CD8-positive, alpha-beta memory T cell (primary cell): ENCODE measurements at regions of chr1 and their contacts with region 1.

Region 1: GRCh38 chr1:205313563-205314308 is 7.8 kb downstream of the NUAK2 start:
- DNase-seq: peak in 4 of 5 donors; percentile 6 to 74 (median 48)
- H3K4me3 ChIP-seq: peak overlapping the region; percentile 47
- H3K4me3 Mint-ChIP-seq: peak overlapping the region; percentile 78 to 91 (median 82)
- H3K27ac ChIP-seq: no peak overlapping the region
- H3K27ac Mint-ChIP-seq: peak overlapping the region; percentile 87 to 96 (median 90)
- H3K4me1 ChIP-seq: peaks cover 87% of the 10 kb centered on the region
- H3K4me1 Mint-ChIP-seq: peaks cover 84 to 98% (median 85%) of the 10 kb centered on the region in 3 donors
- H3K27me3 ChIP-seq: no peaks in the 10 kb centered on the region
- H3K27me3 Mint-ChIP-seq: no peaks in the 10 kb centered on the region

Region 2: GRCh38 chr1:205284343-205285144 is 29.2 kb before region 1 on chr1:
- CTCF ChIA-PET with region 1: interaction called, 1,351 read pairs
- POLR2A ChIA-PET with region 1: interaction called, 86 read pairs
- DNase-seq: peak; percentile 80 to 97 (median 90)
- H3K4me3 ChIP-seq: peak overlapping the region; percentile 80
- H3K4me3 Mint-ChIP-seq: peak overlapping the region; percentile 73 to 87 (median 81)
- H3K27ac ChIP-seq: peak overlapping the region; percentile 7
- H3K27ac Mint-ChIP-seq: peak overlapping the region; percentile 77 to 98 (median 94)
- H3K4me1 ChIP-seq: peaks cover 85% of the 10 kb centered on the region
- H3K4me1 Mint-ChIP-seq: peaks cover 78 to 86% (median 80%) of the 10 kb centered on the region in 3 donors
- H3K27me3 ChIP-seq: no peaks in the 10 kb centered on the region
- H3K27me3 Mint-ChIP-seq: peaks cover 0 to 5% of the 10 kb centered on the region in 2 donors

Region 3: GRCh38 chr1:205375835-205376545 is 62.3 kb after region 1 on chr1:
- CTCF ChIA-PET with region 1: no interaction called
- POLR2A ChIA-PET with region 1: no interaction called
- DNase-seq: no peak
- H3K4me3 ChIP-seq: no peak overlapping the region
- H3K4me3 Mint-ChIP-seq: no peak overlapping the region
- H3K27ac ChIP-seq: no peak overlapping the region
- H3K27ac Mint-ChIP-seq: no peak overlapping the region
- H3K4me1 ChIP-seq: peaks cover 7% of the 10 kb centered on the region
- H3K4me1 Mint-ChIP-seq: peaks cover 14 to 18% (median 16%) of the 10 kb centered on the region in 3 donors
- H3K27me3 ChIP-seq: no peaks in the 10 kb centered on the region
- H3K27me3 Mint-ChIP-seq: peaks cover 22 to 54% of the 10 kb centered on the region in 2 donors